ENCODE measurements at regions of chr7 and their contacts with region 1.

Region 1: DNA sequence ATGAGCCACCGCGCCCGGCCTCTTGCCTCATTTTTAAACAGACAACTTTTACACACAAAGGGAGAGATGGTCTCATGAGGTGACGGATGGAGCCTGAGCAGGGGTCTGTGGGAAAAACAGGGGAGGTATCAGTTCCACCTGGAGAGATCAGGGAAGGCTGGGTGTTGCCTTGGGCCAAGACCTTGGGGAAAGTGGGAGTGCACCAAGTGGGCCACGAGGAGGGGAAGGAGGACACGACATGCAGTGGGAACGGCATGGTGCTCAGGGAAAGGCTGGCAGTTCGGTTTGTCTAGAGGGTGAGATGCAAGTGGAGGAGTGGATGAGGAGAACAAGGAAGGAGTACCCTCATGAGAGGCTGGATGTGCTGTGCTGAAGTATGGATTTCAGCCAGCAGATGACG is 9.0 kb upstream of the ZNF777 start:
- DNase-seq: peak; percentile 46
- H3K4me3 ChIP-seq: no peak overlapping the region
- H3K27ac ChIP-seq: no peak overlapping the region
- H3K4me1 ChIP-seq: no peaks in the 10 kb centered on the region
- H3K27me3 ChIP-seq: no peaks in the 10 kb centered on the region
- CTCF ChIP-seq: no peak
- EP300 ChIP-seq: no peak
- POLR2A ChIP-seq: no peak

Region 2: DNA sequence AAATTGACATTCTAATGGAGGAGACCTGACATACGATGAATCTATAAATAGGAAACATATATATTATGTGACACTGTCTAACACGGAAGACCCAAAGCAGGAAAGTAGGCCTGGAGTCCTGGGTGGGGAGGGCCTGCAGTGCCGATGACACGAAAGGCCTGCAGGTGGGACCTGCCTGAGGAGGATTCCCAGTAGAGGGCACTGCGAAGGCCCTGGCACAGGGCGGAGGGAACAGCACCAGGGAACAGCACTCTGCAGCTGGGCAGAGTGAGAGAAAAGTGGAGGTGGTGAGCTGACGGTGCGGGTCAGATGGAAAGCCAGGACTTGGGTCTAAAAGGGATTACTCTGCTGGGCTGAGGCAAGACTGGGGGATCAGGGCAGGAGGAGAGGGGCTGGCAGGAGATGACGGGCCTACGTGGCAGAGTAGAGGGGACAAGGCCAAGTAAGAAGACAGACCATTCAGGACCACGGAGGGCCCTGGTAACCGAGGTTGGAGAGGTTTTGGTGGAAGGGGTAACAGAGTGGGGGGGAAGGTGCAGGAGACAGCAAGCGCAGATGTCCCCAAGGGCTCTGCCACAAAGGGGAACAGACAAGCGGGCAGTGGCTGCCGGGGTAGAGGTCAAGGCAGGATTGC is 19.7 kb after region 1 on chr7:
- intact Hi-C with region 1: loop called (anchors 1 kb)
- DNase-seq: no peak
- H3K4me3 ChIP-seq: no peak overlapping the region
- H3K27ac ChIP-seq: no peak overlapping the region
- H3K4me1 ChIP-seq: no peaks in the 10 kb centered on the region
- H3K27me3 ChIP-seq: no peaks in the 10 kb centered on the region
- CTCF ChIP-seq: no peak
- EP300 ChIP-seq: no peak
- POLR2A ChIP-seq: no peak

Region 3: GRCh38 chr7:149544028-149544427 is 74.2 kb after region 1 on chr7:
- intact Hi-C with region 1: no loop called
- DNase-seq: no peak
- H3K4me3 ChIP-seq: no peak overlapping the region
- H3K27ac ChIP-seq: no peak overlapping the region
- H3K4me1 ChIP-seq: no peaks in the 10 kb centered on the region
- H3K27me3 ChIP-seq: no peaks in the 10 kb centered on the region
- CTCF ChIP-seq: no peak
- EP300 ChIP-seq: no peak
- POLR2A ChIP-seq: no peak

Measured in sigmoid colon (tissue), 7 donors.